Activated naive CD4-positive, alpha-beta T cell treated with anti-CD3 and anti-CD28 coated beads for 36 hours (primary cell): ENCODE measurements at regions of chr12 and their contacts with region 1.

Region 1: GRCh38 chr12:47828608-47829536 is 9.2 kb upstream of the HDAC7 start:
- DNase-seq: peak; percentile 63
- H3K4me3 Mint-ChIP-seq: peak overlapping the region; percentile 63
- H3K27ac Mint-ChIP-seq: peak overlapping the region; percentile 86
- H3K4me1 Mint-ChIP-seq: peaks cover 86% of the 10 kb centered on the region
- H3K27me3 Mint-ChIP-seq: no peaks in the 10 kb centered on the region

Region 2: GRCh38 chr12:47223848-47224213 is 605.0 kb before region 1 on chr12:
- CTCF ChIA-PET with region 1: no interaction called
- intact Hi-C with region 1: loop called (anchors 5 kb)
- DNase-seq: no peak
- H3K4me3 Mint-ChIP-seq: peak overlapping the region; percentile 69
- H3K27ac Mint-ChIP-seq: peak overlapping the region; percentile 92
- H3K4me1 Mint-ChIP-seq: peaks cover 72% of the 10 kb centered on the region
- H3K27me3 Mint-ChIP-seq: no peaks in the 10 kb centered on the region